Transverse colon (tissue), 4 donors: ENCODE measurements at regions of chr22 and their contacts with region 1.

Region 1: GRCh38 chr22:43147821-43148220 is 3.5 kb upstream of the TSPO start:
- DNase-seq: peak; percentile 55
- H3K4me3 ChIP-seq: no peak overlapping the region
- H3K27ac ChIP-seq: peak overlapping the region in 3 of 4 donors; percentile 14 to 50 (median 41)
- H3K4me1 ChIP-seq: peaks cover 5 to 35% (median 21%) of the 10 kb centered on the region in 4 donors
- H3K27me3 ChIP-seq: no peaks in the 10 kb centered on the region
- CTCF ChIP-seq: no peak
- EP300 ChIP-seq: no peak
- POLR2A ChIP-seq: no peak

Region 2: DNA sequence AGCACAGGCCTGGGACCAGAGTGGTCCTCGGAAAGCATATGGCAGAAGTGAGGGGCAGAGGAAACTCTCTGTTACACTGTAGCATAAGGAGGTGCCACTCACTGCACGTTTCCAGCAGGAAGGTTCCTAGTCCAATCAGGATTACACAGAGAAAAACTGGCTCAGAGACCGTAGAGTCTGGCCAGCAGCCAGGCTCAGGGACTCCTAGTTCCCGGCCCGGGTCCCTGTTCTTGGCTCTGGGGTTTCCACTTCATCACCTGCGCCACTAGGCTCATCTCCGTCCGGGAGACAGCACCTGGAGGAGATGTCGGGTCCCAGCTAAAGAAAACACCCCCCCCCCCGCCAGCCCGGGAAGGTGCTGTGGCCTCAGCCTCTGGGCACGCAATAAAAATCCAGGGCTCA is 38.0 kb after region 1 on chr22:
- in situ Hi-C with region 1: no loop called
- intact Hi-C with region 1: loop called (anchors 1 kb)
- DNase-seq: peak; percentile 62
- H3K4me3 ChIP-seq: peak overlapping the region; percentile 53 to 90 (median 78)
- H3K27ac ChIP-seq: peak overlapping the region; percentile 81 to 97 (median 94)
- H3K4me1 ChIP-seq: peaks cover 0 to 23% (median 18%) of the 10 kb centered on the region in 4 donors
- H3K27me3 ChIP-seq: no peaks in the 10 kb centered on the region
- CTCF ChIP-seq: no peak
- EP300 ChIP-seq: no peak
- POLR2A ChIP-seq: no peak